Transverse colon (tissue), 4 donors: ENCODE measurements at regions of chr9 and their contacts with region 1.

Region 1: DNA sequence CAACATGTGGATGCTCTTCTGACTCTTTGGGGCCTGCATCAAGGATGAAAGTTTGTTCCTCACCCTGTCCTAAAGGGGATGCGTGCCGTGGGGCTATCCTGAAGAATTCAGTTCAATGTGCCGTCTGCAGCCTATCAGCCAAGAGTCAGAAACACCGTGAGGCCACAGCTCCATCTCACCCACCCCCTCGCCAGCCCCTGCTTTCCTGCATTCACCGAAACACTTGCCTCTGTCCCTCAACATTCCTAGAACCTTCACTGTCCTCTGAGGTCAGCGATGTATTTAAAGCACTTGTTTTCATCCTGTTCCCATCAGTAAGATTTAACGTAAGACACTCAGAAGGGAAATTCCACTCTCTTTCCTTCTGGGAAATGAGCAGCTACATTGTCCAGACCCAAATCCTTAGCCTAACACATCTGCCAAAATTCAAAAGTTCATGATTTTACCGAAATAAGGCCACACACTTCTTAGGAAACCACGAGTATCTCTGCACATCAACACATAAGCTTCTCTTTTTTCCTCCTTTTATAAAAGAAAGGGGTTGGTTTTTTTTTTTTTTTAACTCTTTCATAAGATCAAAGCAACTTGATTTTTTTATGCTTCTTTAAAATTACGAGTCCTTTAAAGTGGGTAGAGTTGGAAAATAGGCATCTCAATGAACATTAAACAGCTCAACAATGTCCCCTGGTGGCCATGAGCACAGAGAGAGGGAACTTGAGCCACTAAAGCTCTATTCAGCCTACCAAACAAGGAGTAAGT is 100.7 kb downstream of the SUSD1 start:
- DNase-seq: peak; percentile 76
- H3K4me3 ChIP-seq: no peak overlapping the region
- H3K27ac ChIP-seq: peak overlapping the region; percentile 80 to 88 (median 83)
- H3K4me1 ChIP-seq: peaks cover 4 to 44% (median 14%) of the 10 kb centered on the region in 4 donors
- H3K27me3 ChIP-seq: no peaks in the 10 kb centered on the region
- CTCF ChIP-seq: peak; percentile 88 to 97 (median 95)
- EP300 ChIP-seq: peak; percentile 99
- POLR2A ChIP-seq: no peak

Region 2: DNA sequence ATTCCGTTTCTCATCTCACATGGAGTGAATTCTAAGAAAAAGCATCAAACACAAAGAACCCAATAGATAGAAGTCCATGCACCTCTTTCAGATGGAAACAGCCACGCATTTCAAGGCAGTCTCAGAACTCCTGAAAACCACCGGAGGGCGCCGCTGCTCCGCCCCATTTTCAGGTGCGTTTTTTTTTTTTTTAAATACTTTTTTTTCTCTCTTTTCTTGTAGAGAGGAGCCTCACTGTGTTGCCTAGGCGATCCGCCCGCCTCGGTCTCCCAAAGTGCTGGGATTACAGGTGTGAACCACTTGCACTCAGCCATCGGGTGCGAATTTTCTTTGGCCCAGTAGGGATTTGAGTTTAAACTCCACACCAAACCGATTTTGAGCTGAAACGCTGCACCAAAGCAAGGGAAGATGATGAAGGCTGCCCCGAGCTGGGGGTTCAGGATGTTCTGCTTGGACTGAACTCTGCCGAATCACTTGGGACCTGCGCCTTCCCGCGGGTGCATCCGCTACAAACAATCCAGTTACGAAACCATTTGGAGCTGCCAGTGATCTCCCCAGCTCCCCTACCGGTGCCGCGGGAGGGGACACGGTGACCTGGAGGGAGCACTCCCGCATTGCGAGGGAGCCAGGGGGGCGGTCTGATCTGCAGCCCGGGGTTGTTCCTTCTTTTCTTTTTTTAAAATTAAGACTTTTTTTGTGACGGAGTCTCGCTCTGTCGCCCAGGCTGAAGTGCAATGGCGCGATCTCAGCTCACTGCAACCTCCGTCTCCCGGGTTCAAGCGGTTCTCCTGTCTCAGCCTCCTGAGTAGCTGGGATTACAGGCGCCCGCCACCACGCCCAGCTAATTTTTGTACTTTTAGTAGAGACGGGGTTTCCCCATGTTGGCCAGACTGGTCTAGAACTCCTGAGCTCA is 476.4 kb before region 1 on chr9:
- in situ Hi-C with region 1: loop called in 1 of 4 experiments (anchors 25 kb)
- intact Hi-C with region 1: loop called (anchors 10 kb)
- DNase-seq: peak; percentile 71
- H3K4me3 ChIP-seq: peak overlapping the region; percentile 47 to 78 (median 77)
- H3K27ac ChIP-seq: peak overlapping the region; percentile 89 to 94 (median 91)
- H3K4me1 ChIP-seq: peaks cover 0 to 5% (median 5%) of the 10 kb centered on the region in 4 donors
- H3K27me3 ChIP-seq: no peaks in the 10 kb centered on the region
- CTCF ChIP-seq: peak; percentile 64 to 72 (median 71)
- EP300 ChIP-seq: no peak
- POLR2A ChIP-seq: no peak

Region 3: DNA sequence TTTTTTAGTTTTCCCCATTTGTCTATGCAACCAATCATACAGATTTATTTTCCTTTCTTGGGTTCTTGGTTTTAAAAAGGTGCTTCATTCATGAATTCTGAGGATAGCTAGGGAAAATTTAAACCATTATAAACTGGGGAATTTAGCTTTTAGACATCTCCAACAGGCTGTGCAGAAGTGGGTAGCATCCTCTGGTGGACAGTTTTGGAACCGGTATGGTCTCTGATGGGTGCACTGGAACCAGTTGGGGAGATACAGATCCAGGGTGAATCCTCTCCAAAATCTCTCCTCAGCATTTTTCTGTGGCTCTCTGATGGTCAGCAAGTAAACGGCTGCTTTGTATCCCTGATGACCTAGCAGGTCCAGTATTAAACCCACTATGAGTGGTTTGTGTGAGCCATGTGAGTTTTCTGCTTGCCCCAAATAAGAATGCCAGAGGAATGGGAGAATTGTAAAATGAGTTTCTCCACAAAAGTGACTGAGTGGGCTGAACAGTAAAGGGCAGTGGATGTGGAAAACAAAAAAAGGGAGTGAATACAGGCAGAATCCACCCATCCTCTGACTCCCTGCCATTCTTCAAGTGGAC is 452.4 kb before region 1 on chr9:
- in situ Hi-C with region 1: loop called in 1 of 4 experiments (anchors 25 kb)
- intact Hi-C with region 1: no loop called
- DNase-seq: peak; percentile 33
- H3K4me3 ChIP-seq: no peak overlapping the region
- H3K27ac ChIP-seq: no peak overlapping the region
- H3K4me1 ChIP-seq: no peaks in the 10 kb centered on the region
- H3K27me3 ChIP-seq: peaks cover 3% of the 10 kb centered on the region
- CTCF ChIP-seq: peak; percentile 61 to 76 (median 65)
- EP300 ChIP-seq: no peak
- POLR2A ChIP-seq: no peak

Region 4: DNA sequence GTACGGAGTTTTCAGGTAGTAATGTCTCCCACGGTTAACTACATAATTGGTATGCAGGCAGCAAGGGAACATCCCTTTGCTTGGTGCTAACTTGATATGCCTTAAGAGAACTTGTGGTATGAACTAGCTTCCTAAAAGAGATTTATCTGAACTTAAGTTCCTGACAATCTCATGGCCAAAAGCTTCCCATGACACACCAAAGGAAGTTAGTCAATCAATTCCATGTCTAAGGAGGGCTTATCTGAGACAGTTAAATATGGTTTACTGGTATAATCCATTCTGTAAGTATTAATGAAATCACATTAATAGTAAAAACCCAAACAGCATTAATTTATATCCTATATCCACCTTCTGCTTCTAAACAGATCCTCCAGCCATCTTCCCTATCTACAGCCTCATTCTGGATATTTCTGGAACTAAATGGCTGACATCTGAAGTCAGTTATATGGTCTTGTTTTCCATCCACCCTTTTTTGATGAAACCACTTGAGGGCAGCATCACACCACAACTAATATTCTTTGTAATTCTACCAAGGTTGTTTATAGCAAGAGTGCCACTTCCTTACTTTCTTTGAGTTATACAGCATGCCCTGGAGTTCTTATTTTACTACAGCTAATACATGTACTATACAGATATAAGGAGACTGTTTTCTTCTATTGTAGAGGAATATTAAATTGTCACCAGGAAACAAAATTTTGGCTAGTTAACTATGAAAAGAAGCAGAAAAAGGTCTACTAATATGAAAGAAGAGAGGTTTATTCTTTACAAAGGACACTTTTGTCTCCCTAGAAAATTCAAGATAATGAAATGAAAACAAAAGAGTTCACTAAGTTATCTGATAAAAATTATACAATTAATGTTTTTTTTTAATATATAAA is 314.4 kb before region 1 on chr9:
- in situ Hi-C with region 1: loop called in 3 of 4 experiments (anchors 5 kb)
- intact Hi-C with region 1: no loop called
- DNase-seq: peak; percentile 49
- H3K4me3 ChIP-seq: no peak overlapping the region
- H3K27ac ChIP-seq: no peak overlapping the region
- H3K4me1 ChIP-seq: peaks cover 3 to 7% (median 4%) of the 10 kb centered on the region in 4 donors
- H3K27me3 ChIP-seq: no peaks in the 10 kb centered on the region
- CTCF ChIP-seq: peak; percentile 59 to 81 (median 69)
- EP300 ChIP-seq: no peak
- POLR2A ChIP-seq: no peak

Region 5: DNA sequence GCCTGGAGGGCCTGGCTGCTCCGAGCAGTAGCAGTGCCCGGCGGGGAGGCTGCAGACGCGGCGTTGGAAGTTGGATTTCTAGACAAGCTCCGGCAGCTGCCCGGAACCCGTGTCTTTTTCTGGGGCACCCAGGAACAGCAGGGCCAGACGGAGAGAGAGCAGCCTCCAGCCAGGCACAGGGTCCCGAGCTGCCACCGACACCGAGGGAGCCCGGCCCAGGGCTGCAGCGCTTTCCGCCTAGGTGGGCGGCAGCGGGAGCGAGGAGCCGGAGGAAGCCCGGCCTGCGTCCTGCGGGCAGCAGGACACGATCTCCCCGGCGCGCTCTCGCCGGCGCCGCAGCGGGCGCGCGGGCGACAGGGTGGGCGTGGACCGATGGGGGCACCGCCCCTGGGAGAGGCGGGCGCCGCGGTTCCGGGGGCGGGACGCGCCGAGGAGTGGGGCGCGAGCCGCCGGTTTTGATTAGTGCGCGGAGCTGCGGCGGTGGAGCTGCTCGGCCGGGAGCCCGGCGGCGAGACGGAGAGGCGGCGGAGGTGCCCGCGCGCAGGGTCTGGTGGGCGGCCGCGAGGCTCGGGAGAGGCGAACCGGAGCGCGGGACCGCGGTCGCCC is 178.0 kb before region 1 on chr9 and contains the start of gene UGCG:
- in situ Hi-C with region 1: loop called in 1 of 4 experiments (anchors 25 kb)
- intact Hi-C with region 1: loop called (anchors 5 kb)
- DNase-seq: peak; percentile 92
- H3K4me3 ChIP-seq: peak within 1 kb of the TSS; percentile 74 to 89 (median 82)
- H3K27ac ChIP-seq: peak within 1 kb of the TSS; percentile 93 to 98 (median 96)
- H3K4me1 ChIP-seq: peaks cover 16 to 54% (median 43%) of the 10 kb centered on the region in 4 donors
- H3K27me3 ChIP-seq: no peaks in the 10 kb centered on the region
- CTCF ChIP-seq: peak in 1 of 5 experiments; percentile 15
- EP300 ChIP-seq: no peak
- POLR2A ChIP-seq: peak; percentile 97
- total RNA-seq, gene UGCG: 3.8 to 62.6 (median 29.9) TPM

Region 6: GRCh38 chr9:112689161-112689740 is 614.8 kb after region 1 on chr9:
- in situ Hi-C with region 1: no loop called
- intact Hi-C with region 1: no loop called
- DNase-seq: no peak
- H3K4me3 ChIP-seq: no peak overlapping the region
- H3K27ac ChIP-seq: no peak overlapping the region
- H3K4me1 ChIP-seq: no peaks in the 10 kb centered on the region
- H3K27me3 ChIP-seq: no peaks in the 10 kb centered on the region
- CTCF ChIP-seq: no peak
- EP300 ChIP-seq: no peak
- POLR2A ChIP-seq: no peak